Activated naive CD4-positive, alpha-beta T cell treated with anti-CD3 and anti-CD28 coated beads, Interleukin-2, amount 10 ng/mL, durations not matched to agents 7 days and 5 days (primary cell): ENCODE measurements at regions of chr7 and their contacts with region 1.

Region 1: DNA sequence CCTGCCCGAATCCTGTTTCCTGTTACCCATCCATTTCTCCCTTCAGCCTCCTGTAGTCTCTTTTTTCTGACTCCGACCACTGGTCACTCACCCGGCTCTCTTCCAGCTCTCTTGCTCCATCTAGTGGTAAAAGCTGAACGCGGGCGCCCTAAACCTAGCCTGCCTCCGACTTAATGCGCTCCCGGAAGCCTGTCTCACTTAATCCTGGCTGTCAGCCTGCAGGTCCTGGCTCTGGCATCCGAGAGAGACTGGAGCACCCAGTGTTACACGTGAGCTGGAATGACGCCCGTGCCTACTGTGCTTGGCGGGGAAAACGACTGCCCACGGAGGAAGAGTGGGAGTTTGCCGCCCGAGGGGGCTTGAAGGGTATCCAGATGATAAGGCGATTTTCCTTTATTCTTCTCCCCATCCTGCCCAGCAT is 10.3 kb downstream of the SUMF2 start:
- DNase-seq: peak; percentile 71
- H3K4me3 Mint-ChIP-seq: no peak overlapping the region
- H3K27ac Mint-ChIP-seq: peak overlapping the region; percentile 33
- H3K4me1 Mint-ChIP-seq: peaks cover 5% of the 10 kb centered on the region
- H3K27me3 Mint-ChIP-seq: no peaks in the 10 kb centered on the region

Region 2: GRCh38 chr7:55641273-55641691 is 433.1 kb before region 1 on chr7:
- CTCF ChIA-PET with region 1: interaction called, 26 read pairs
- DNase-seq: peak; percentile 48
- H3K4me3 Mint-ChIP-seq: no peak overlapping the region
- H3K27ac Mint-ChIP-seq: no peak overlapping the region
- H3K4me1 Mint-ChIP-seq: peaks cover 12% of the 10 kb centered on the region
- H3K27me3 Mint-ChIP-seq: peaks cover 8% of the 10 kb centered on the region

Region 3: GRCh38 chr7:56007167-56007652 is 67.2 kb before region 1 on chr7:
- CTCF ChIA-PET with region 1: interaction called, 41 read pairs
- DNase-seq: no peak
- H3K4me3 Mint-ChIP-seq: no peak overlapping the region
- H3K27ac Mint-ChIP-seq: no peak overlapping the region
- H3K4me1 Mint-ChIP-seq: no peaks in the 10 kb centered on the region
- H3K27me3 Mint-ChIP-seq: no peaks in the 10 kb centered on the region

Region 4: GRCh38 chr7:56063882-56064625 is 10.3 kb before region 1 on chr7 and contains the start of gene SUMF2:
- CTCF ChIA-PET with region 1: interaction called, 14 read pairs
- DNase-seq: peak; percentile 91
- H3K4me3 Mint-ChIP-seq: peak within 1 kb of the TSS; percentile 90
- H3K27ac Mint-ChIP-seq: peak within 1 kb of the TSS; percentile 97
- H3K4me1 Mint-ChIP-seq: peaks cover 39% of the 10 kb centered on the region
- H3K27me3 Mint-ChIP-seq: no peaks in the 10 kb centered on the region